GM12878 (cell line): ENCODE measurements at regions of chr11 and their contacts with region 1.

Region 1: DNA sequence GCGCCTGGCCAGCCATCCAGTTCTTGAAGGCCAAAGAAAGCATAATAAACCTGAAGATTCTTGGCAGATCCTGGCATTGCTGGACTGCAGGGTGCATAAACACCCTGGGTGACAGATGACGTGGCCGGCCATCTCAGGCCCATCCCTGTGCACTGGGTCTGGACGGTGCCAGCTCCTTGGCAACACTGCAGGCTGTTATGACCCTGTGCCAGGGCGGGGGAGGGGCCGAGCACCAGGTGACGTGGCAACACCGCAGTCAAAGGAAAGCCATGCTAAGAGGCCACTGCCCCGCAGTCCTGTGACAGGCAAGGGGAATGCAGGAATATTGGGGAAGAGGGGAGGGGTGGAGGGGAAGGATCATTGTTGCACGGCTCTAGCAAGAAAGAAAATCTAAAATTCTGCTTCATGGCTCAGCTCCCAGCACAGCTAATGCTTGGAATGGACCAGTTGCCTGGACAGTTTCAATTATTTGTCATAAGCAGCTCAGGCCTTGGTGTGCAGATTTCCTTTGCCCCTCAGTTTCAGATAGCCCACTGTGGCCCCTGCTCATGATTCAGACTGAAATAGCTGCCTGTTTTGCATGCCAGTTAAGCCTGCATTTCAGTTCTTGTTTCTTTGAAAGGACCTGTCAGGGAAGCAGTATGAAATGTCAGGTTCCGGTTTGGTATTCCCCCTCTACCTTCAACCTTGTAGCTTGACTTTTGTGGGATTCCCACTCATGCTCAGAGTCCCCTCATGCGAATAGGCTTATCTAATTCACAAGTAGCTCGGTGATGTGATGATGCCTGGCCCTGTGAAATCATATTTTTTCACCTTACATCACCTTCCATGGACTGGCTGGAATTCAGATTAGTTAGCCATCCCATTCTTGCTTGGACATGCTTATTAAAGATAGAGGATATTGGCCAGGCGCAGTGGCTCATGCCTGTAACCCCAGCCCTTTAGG is 29.7 kb upstream of the DDX6 start:
- DNase-seq: peak; percentile 99
- ATAC-seq: peak; percentile 93
- H3K4me3 ChIP-seq: peak overlapping the region; percentile 23; the same call in 1 of the 2 replicates
- H3K27ac ChIP-seq: peak overlapping the region; percentile 94
- H3K4me1 ChIP-seq: peaks cover 50% of the 10 kb centered on the region
- H3K27me3 ChIP-seq: no peaks in the 10 kb centered on the region
- CTCF ChIP-seq: no peak
- EP300 ChIP-seq: peak; percentile 96 to 97
- POLR2A ChIP-seq: peak; percentile 13; the same call in 1 of the 2 replicates
- RAD21 ChIP-seq: 0 out of 2 replicates have a peak, but pooled peaks have one; percentile 27

Region 2: GRCh38 chr11:118807800-118808778 is 12.6 kb before region 1 on chr11:
- CTCF ChIA-PET with region 1: interaction called, 12 read pairs
- POLR2A ChIA-PET with region 1: interaction called, 9 read pairs
- RAD21 ChIA-PET with region 1: interaction called, 5 read pairs
- SMC1A ChIA-PET with region 1: interaction called, 7 read pairs
- in situ Hi-C with region 1: no loop called
- intact Hi-C with region 1: no loop called
- DNase-seq: no peak
- ATAC-seq: no peak
- H3K4me3 ChIP-seq: no peak overlapping the region
- H3K27ac ChIP-seq: no peak overlapping the region
- H3K4me1 ChIP-seq: no peaks in the 10 kb centered on the region
- H3K27me3 ChIP-seq: no peaks in the 10 kb centered on the region
- CTCF ChIP-seq: no peak
- EP300 ChIP-seq: no peak
- POLR2A ChIP-seq: no peak
- RAD21 ChIP-seq: no peak

Region 3: GRCh38 chr11:118870396-118871345 is 50.0 kb after region 1 on chr11:
- CTCF ChIA-PET with region 1: interaction called, 3 read pairs
- POLR2A ChIA-PET with region 1: interaction called, 4 read pairs
- RAD21 ChIA-PET with region 1: interaction called, 4 read pairs
- SMC1A ChIA-PET with region 1: interaction called, 10 read pairs
- in situ Hi-C with region 1: no loop called
- intact Hi-C with region 1: no loop called
- DNase-seq: peak; percentile 57
- ATAC-seq: peak; percentile 87
- H3K4me3 ChIP-seq: peak overlapping the region; percentile 7; the same call in 1 of the 2 replicates
- H3K27ac ChIP-seq: no peak overlapping the region
- H3K4me1 ChIP-seq: peaks cover 30% of the 10 kb centered on the region
- H3K27me3 ChIP-seq: peaks cover 3 to 7% of the 10 kb centered on the region in 2 experiments
- CTCF ChIP-seq: no peak
- EP300 ChIP-seq: no peak
- POLR2A ChIP-seq: no peak
- RAD21 ChIP-seq: no peak

Region 4: GRCh38 chr11:118883368-118884071 is 62.8 kb after region 1 on chr11 and contains the start of gene CXCR5:
- CTCF ChIA-PET with region 1: interaction called, 11 read pairs
- POLR2A ChIA-PET with region 1: interaction called, 16 read pairs
- RAD21 ChIA-PET with region 1: interaction called, 66 read pairs
- SMC1A ChIA-PET with region 1: interaction called, 26 read pairs
- in situ Hi-C with region 1: no loop called
- intact Hi-C with region 1: no loop called
- DNase-seq: no peak
- ATAC-seq: peak; percentile 81
- H3K4me3 ChIP-seq: peak within 1 kb of the TSS; percentile 13; the same call in 1 of the 2 replicates
- H3K27ac ChIP-seq: no peak within 1 kb of the TSS
- H3K4me1 ChIP-seq: peaks cover 43% of the 10 kb centered on the region
- H3K27me3 ChIP-seq: peaks cover 3 to 9% of the 10 kb centered on the region in 2 experiments; a peak in 2 of 4 replicates
- CTCF ChIP-seq: peak in 2 of 3 experiments; percentile 8 to 27; a peak in 2 of 6 replicates
- EP300 ChIP-seq: no peak
- POLR2A ChIP-seq: peak; percentile 58
- RAD21 ChIP-seq: peak; percentile 30; the same call in 1 of the 2 replicates
- polyA plus RNA-seq, gene CXCR5: 0.03 to 0.11 TPM